ENCODE measurements at regions of chr1 and their contacts with region 1.

Region 1: DNA sequence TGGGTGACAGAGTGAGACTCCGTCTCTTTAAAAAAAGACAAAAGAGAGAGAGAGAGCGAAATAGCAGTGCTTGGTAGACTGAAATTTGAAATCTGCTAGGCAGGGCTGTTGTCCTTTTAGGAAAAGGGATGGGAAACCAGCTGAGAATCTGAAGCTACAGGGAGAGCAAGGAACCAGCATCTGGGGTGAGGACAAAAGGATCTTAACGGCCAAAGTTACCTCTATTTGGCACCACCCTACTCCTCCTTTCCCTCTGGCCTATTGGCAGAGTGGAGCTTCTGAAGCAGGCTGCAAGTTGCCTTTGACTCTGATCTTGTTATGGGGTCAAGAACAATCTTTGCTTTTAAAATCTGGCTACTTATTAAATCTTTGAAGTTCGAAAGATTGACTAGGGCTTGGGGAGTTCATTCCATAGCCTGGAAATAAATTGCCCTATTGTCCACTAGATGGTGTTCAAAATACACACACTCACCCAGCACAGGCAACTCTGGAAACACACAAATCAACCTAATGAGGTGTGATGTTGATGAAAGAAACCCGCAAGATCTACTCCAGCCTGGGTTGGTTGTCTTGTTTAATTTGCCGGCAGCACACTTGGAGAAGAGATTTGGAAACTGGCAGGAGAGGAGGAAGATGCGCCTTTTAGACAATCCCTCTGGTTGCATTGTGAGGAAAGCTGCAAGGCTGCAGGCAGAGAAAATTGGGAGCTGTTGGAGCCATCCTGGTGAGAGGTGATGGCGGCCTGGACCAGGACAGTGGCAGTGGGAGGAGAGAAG is 16.5 kb upstream of the PARP1 start:
- DNase-seq: peak in 2 of 10 donors; percentile 24 to 31
- H3K4me3 ChIP-seq: no peak overlapping the region
- H3K27ac ChIP-seq: peak overlapping the region in 1 of 59 donors; percentile 32
- H3K27me3 ChIP-seq: no peaks in the 10 kb centered on the region
- CTCF ChIP-seq: peak; percentile 51 to 87 (median 71)

Region 2: GRCh38 chr1:226547754-226548191 is 123.4 kb after region 1 on chr1:
- intact Hi-C with region 1: loop called (anchors 2 to 10 kb)
- DNase-seq: peak; percentile 59 to 85 (median 78)
- H3K4me3 ChIP-seq: peak overlapping the region in 41 of 59 donors; percentile 14 to 73 (median 66)
- H3K27ac ChIP-seq: peak overlapping the region in 2 of 59 donors; percentile 11 to 63
- H3K27me3 ChIP-seq: peaks cover 0 to 6% (median 0%) of the 10 kb centered on the region in 45 donors
- CTCF ChIP-seq: peak; percentile 59 to 88 (median 76)

Region 3: DNA sequence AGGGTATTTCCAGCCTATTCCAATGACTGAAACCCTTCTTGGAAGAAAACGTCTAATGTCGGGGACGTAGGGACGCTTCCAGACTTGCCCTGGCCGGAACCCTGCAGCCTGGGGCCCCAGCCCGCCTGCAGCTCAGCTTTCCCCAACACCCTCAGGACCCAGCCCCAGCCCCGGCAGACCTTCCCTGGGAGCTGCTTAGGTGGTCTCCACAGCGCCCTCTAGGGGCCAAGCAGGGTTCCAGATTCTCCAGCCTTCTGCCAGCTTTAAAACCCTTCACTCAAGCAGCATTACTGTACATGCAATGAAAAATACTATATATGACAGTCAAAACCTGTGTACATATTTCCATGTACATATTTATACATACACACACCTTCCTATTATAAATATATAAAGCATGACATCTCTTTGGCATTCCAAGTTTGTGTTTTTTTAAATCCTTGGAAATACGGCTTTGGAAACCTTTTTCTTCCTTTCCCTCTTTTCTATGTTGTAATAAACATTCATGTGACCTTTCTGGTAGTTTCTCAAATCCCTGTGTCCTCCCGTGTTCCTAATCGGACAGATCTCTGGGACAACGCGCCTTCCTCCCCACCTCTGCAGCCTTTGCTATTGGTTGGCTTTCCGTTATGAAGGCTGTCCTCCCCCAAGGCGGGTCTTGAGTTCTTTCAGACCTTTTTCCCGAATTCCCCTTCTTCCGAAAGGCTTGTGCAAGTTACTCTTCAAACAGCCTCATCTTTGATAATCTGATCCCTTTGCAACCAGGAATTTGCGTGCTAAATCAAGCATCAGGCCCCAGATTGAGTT is 184.5 kb after region 1 on chr1:
- intact Hi-C with region 1: loop called (anchors 2 to 5 kb)
- DNase-seq: peak in 9 of 10 donors; percentile 42 to 76 (median 68)
- H3K4me3 ChIP-seq: no peak overlapping the region
- H3K27ac ChIP-seq: no peak overlapping the region
- H3K27me3 ChIP-seq: no peaks in the 10 kb centered on the region
- CTCF ChIP-seq: peak; percentile 59 to 89 (median 82)

Region 4: GRCh38 chr1:226626577-226626956 is 202.2 kb after region 1 on chr1:
- intact Hi-C with region 1: loop called in 1 of 2 experiments (anchors 5 kb)
- DNase-seq: peak; percentile 70 to 84 (median 76)
- H3K4me3 ChIP-seq: peak overlapping the region in 15 of 59 donors; percentile 4 to 44 (median 17)
- H3K27ac ChIP-seq: peak overlapping the region in 19 of 59 donors; percentile 9 to 71 (median 44)
- H3K27me3 ChIP-seq: no peaks in the 10 kb centered on the region
- CTCF ChIP-seq: peak; percentile 92 to 99 (median 98)